Activated CD4-positive, alpha-beta T cell treated with anti-CD3 and anti-CD28 coated beads, Interleukin-2, amount 10 ng/mL, durations not matched to agents 7 days and 5 days (primary cell): ENCODE measurements at regions of chr12 and their contacts with region 1.

Region 1: GRCh38 chr12:107681836-107682820 is 3.5 kb upstream of the PWP1 start:
- DNase-seq: no peak
- H3K4me3 Mint-ChIP-seq: no peak overlapping the region
- H3K27ac Mint-ChIP-seq: no peak overlapping the region
- H3K4me1 Mint-ChIP-seq: peaks cover 21% of the 10 kb centered on the region
- H3K27me3 Mint-ChIP-seq: peaks cover 18% of the 10 kb centered on the region

Region 2: DNA sequence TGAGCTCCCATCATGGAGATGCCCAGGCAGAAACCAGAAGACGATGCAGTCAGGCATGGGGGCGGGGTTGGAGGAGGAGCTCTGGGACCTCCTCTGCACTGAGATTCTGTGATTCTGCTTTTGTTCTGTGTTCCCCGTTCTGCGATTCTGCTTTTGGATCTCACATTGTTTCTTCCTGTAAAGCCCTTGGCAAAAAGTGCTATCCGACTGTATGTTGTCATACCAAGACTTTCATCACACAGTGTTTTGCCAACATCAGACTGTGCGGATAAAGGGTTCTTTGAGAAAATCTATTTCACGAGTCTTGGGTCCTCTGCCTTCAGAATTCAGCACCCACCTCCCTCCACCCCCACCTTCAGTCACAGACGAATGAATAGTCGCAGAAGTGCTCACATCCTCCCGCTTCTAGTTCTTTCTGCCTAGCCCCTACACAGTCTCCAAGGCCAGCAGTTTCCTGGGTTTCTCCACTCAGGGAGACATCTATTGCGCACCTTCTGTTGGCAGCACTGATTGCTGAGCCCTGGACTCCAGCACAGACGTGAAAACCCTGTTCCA is 21.2 kb before region 1 on chr12:
- CTCF ChIA-PET with region 1: no interaction called
- POLR2A ChIA-PET with region 1: no interaction called
- DNase-seq: no peak
- H3K4me3 Mint-ChIP-seq: no peak overlapping the region
- H3K27ac Mint-ChIP-seq: no peak overlapping the region
- H3K4me1 Mint-ChIP-seq: peaks cover 12% of the 10 kb centered on the region
- H3K27me3 Mint-ChIP-seq: no peaks in the 10 kb centered on the region

Region 3: DNA sequence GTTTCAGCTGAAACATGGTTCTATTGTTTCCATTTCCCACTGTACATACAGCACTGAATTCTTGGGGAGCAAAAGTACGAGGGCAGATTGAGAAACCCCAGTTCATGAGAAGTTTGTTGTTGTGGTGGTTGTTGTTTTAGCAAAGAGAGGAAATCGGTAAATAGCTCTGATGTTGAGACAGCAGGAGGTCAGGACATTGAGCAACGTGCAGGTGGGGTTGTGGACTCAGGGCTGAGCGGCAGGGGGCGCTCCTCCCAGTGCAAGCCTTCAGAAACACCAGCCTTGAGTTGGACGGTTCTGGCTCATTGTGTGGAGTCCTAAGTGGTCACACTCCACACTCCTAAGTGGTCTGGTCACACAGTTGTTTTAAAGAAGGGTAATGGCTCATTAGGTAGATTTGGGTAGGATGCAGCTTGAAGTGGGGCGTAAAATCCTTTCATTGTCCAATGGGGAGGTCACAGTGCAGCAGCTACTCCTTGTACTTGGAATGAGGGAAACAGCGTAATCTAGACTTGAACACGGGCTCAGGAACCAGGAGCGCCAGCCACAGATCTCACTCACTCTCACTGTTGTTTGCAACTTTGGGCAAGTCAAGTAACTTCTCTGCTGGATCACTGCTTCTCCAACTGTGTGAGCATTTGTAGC is 11.0 kb before region 1 on chr12:
- CTCF ChIA-PET with region 1: interaction called, 10 read pairs
- POLR2A ChIA-PET with region 1: no interaction called
- DNase-seq: peak; percentile 41
- H3K4me3 Mint-ChIP-seq: no peak overlapping the region
- H3K27ac Mint-ChIP-seq: no peak overlapping the region
- H3K4me1 Mint-ChIP-seq: peaks cover 5% of the 10 kb centered on the region
- H3K27me3 Mint-ChIP-seq: peaks cover 13% of the 10 kb centered on the region

Region 4: DNA sequence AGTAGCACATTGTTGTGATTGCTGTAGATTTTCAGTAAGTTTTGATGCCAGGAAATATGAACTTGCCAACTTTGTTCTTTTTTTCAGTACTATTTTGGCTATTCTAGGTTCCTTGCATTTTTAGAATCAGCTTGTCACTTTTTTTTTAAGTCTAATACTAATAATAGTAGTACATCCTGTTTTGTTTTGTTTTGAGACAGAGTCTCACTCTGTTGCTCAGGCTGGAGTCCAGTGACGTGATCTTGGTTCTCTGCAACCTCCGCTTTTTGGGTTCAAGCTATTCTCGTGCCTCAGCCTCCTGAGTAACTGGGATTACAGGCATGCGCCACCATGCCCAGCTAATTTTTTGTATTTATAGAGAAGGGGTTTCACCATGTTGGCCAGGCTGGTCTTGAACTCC is 20.0 kb after region 1 on chr12:
- CTCF ChIA-PET with region 1: no interaction called
- POLR2A ChIA-PET with region 1: no interaction called
- DNase-seq: no peak
- H3K4me3 Mint-ChIP-seq: no peak overlapping the region
- H3K27ac Mint-ChIP-seq: no peak overlapping the region
- H3K4me1 Mint-ChIP-seq: no peaks in the 10 kb centered on the region
- H3K27me3 Mint-ChIP-seq: no peaks in the 10 kb centered on the region